ENCODE measurements at regions of chr5 and their contacts with region 1.

Region 1: DNA sequence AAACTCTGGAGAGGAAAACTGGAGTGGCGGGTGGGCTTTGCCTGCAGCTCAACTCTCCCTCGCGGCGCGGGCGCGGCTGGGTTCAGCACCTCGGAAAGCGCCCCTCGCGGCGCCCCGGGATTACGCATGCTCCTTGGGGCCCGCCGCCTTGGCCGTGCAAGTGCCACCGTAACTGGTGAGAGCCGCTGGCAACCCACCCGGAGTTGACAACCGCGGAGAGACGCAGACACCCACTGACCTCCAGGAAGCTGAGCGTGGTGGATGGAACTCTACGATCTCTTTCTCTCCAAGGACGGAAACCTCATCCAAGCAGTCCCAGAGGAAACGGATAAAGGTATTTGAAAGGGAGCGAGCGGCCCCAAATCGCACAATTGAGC is 194 bp upstream of the RXFP3 start:
- DNase-seq: peak; percentile 64
- ATAC-seq: peak; percentile 68
- H3K4me3 Mint-ChIP-seq: no peak overlapping the region
- H3K27ac Mint-ChIP-seq: no peak overlapping the region
- H3K4me1 Mint-ChIP-seq: no peaks in the 10 kb centered on the region
- H3K27me3 Mint-ChIP-seq: peaks cover 46% of the 10 kb centered on the region
- CTCF ChIP-seq: no peak

Region 2: GRCh38 chr5:33440482-33441240 is 495.3 kb before region 1 on chr5 and contains the start of gene TARS1:
- CTCF ChIA-PET with region 1: interaction called, 12 read pairs
- POLR2A ChIA-PET with region 1: no interaction called
- intact Hi-C with region 1: loop called (anchors 2 kb)
- DNase-seq: peak; percentile 97
- ATAC-seq: peak; percentile 96
- H3K4me3 Mint-ChIP-seq: no peak within 1 kb of the TSS
- H3K27ac Mint-ChIP-seq: no peak within 1 kb of the TSS
- H3K4me1 Mint-ChIP-seq: peaks cover 35% of the 10 kb centered on the region
- H3K27me3 Mint-ChIP-seq: no peaks in the 10 kb centered on the region
- CTCF ChIP-seq: no peak
- total RNA-seq, gene TARS1: 208 to 210 TPM

Region 3: GRCh38 chr5:33588654-33589372 is 347.2 kb before region 1 on chr5:
- CTCF ChIA-PET with region 1: interaction called, 33 read pairs
- POLR2A ChIA-PET with region 1: no interaction called
- intact Hi-C with region 1: loop called (anchors 10 kb)
- DNase-seq: peak; percentile 67
- ATAC-seq: peak; percentile 66
- H3K4me3 Mint-ChIP-seq: no peak overlapping the region
- H3K27ac Mint-ChIP-seq: no peak overlapping the region
- H3K4me1 Mint-ChIP-seq: no peaks in the 10 kb centered on the region
- H3K27me3 Mint-ChIP-seq: peaks cover 4% of the 10 kb centered on the region
- CTCF ChIP-seq: peak; percentile 65

Region 4: DNA sequence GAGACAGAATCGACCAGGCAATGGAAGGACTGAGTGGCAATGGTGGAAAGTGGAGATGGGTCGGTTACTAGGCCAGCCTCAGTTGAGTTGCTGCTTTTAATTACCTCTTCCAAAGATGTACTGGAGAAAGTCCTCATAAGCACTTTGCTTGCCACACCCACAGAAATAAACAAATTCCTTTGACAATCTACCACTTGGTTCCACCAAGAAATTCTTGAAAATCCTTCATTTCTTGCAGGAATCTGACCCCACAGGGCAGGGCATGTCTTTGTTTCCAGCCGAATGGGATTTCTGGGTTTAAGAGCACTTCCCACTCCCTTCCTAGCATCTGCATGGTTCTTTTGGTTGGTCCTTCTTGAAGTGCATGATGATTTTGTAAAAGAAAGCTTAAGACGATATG is 98.7 kb before region 1 on chr5:
- CTCF ChIA-PET with region 1: no interaction called
- POLR2A ChIA-PET with region 1: no interaction called
- intact Hi-C with region 1: no loop called
- DNase-seq: no peak
- ATAC-seq: no peak
- H3K4me3 Mint-ChIP-seq: no peak overlapping the region
- H3K27ac Mint-ChIP-seq: no peak overlapping the region
- H3K4me1 Mint-ChIP-seq: peaks cover 12% of the 10 kb centered on the region
- H3K27me3 Mint-ChIP-seq: no peaks in the 10 kb centered on the region
- CTCF ChIP-seq: no peak

Region 5: GRCh38 chr5:33978307-33978706 is 42.3 kb after region 1 on chr5:
- CTCF ChIA-PET with region 1: no interaction called
- POLR2A ChIA-PET with region 1: no interaction called
- intact Hi-C with region 1: no loop called
- DNase-seq: no peak
- ATAC-seq: no peak
- H3K4me3 Mint-ChIP-seq: no peak overlapping the region
- H3K27ac Mint-ChIP-seq: no peak overlapping the region
- H3K4me1 Mint-ChIP-seq: peaks cover 3% of the 10 kb centered on the region
- H3K27me3 Mint-ChIP-seq: peaks cover 1% of the 10 kb centered on the region
- CTCF ChIP-seq: no peak

Region 6: GRCh38 chr5:34007621-34008600 is 71.9 kb after region 1 on chr5 and contains the start of gene AMACR:
- CTCF ChIA-PET with region 1: no interaction called
- POLR2A ChIA-PET with region 1: no interaction called
- intact Hi-C with region 1: no loop called
- DNase-seq: peak; percentile 88
- ATAC-seq: peak; percentile 89
- H3K4me3 Mint-ChIP-seq: peak within 1 kb of the TSS; percentile 86
- H3K27ac Mint-ChIP-seq: peak within 1 kb of the TSS; percentile 92
- H3K4me1 Mint-ChIP-seq: peaks cover 27% of the 10 kb centered on the region
- H3K27me3 Mint-ChIP-seq: no peaks in the 10 kb centered on the region
- CTCF ChIP-seq: no peak
- total RNA-seq, gene AMACR: 6.5 to 7.7 TPM

Measured in activated CD8-positive, alpha-beta T cell treated with anti-CD3 and anti-CD28 coated beads for 36 hours (primary cell).